ENCODE measurements at regions of chr2 and their contacts with region 1.

Region 1: DNA sequence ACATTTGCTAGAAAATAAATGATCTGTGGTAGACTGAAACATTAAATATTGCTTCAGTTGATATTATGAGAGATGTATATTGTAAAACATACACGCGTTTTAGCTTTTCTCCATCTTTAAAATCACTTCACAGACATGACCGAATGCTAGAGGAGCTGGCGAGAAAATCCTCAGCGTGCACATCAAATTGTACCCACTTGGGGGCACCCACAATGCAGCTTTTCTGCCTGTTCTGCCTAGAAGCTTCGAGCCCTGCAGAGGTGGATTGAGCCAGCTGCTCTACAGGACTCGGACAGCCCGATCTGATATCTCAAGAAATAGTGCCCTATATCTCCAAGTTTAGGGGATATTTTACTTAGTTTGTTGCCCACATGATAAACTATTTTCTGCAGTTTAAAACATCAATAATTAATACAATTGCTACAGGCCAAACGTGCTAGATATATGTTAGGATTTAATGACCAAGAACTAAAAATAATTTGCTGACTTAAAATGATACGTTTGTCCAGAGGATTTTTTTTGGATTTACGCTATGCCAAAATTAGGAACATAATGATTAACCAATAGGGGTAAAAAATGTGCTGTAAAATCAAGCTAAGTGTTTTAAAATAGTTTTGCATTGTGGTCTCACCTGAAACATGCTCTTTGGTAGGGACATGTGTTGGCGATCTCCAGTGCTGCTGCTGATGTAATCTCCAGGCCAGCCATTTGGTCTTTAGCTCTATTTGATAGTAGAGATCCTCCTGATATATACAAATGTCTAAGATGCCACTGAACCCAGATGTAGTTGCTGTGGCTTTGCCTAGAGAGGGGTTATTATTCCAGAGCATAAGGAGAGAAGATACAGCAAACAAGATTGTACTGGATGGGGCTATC is 22.3 kb upstream of the ATP5MC3 start:
- DNase-seq: peak; percentile 70

Region 2: DNA sequence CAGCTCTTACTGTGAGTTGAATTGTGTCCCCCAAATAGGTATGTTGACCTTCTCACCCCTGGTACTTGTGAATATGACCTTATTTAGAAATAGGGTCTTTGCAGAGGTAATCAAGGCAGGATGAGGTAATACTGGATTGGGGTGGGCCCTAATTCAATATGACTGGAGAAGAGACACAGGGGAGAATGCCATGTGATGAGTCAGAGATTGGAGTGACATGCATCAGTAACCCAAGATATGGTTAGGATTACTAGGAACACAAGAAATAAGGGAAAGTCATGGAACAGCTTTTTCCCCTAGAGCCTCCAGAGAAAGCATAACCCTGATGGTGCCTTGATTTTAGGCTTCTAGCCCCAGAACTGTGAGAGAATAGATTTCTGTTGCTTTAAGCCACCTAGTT is 14.7 kb after region 1 on chr2:
- CTCF ChIA-PET with region 1: no interaction called
- POLR2A ChIA-PET with region 1: no interaction called
- DNase-seq: no peak

Region 3: DNA sequence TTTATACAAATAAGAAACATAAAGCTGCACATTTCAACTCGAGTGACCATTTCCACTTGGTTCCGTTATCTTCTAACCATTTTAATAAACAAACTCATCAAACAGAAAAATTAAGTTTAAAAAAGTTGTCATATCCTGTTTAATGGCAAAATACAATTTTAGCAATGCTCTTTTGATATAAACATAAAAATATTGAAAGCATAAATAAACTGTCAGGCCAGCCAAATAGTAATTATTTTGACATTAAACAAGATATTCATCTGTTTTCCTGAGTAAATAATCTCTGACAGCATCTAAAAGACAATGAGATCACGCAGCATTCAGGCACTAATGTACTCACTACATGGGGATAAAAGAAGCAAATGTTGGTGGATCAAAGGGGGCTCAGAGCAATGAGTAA is 122.9 kb after region 1 on chr2:
- CTCF ChIA-PET with region 1: interaction called, 12 read pairs
- POLR2A ChIA-PET with region 1: no interaction called
- DNase-seq: no peak